HepG2 (cell line): ENCODE measurements at regions of chr4 and their contacts with region 1.

Region 1: GRCh38 chr4:79958466-79959264 is 114.4 kb downstream of the ANTXR2 start:
- DNase-seq: no peak
- ATAC-seq: no peak
- H3K4me3 ChIP-seq: no peak overlapping the region
- H3K27ac ChIP-seq: no peak overlapping the region
- H3K4me1 ChIP-seq: no peaks in the 10 kb centered on the region
- H3K27me3 ChIP-seq: no peaks in the 10 kb centered on the region
- CTCF ChIP-seq: no peak
- EP300 ChIP-seq: no peak
- POLR2A ChIP-seq: no peak
- RAD21 ChIP-seq: no peak

Region 2: DNA sequence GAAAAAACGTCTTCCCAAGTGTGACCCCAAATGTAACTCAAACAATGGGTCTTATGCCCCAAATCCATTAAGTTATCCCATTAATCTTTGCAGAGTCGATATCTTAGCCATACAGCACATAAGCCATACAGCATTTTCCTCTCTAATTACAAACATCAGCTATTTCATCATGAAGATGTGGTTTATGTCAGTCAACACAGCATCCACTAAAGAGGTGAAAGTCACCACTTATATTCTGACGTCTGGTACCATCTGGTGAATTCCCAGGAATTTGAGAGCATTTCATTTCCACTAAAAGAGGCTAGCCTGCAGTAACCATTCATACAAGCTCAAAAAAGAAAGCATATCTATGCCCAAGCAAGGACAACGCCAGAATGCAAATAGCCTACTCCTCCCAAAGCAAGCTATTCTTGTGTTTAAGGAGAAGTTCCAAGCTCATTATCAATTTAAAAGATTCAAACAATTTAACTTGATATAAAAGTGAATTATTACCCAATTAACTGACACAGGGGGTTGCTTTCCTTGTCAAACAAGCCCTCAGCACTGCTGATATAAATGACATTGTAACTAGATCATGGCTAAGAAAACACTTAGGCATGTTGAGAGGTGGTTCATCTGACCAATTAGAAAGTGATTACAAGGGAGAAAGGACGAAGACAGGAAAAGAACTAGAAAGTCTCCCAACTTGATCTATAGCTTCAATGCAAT is 88.9 kb before region 1 on chr4:
- CTCF ChIA-PET with region 1: no interaction called
- POLR2A ChIA-PET with region 1: no interaction called
- in situ Hi-C with region 1: no loop called
- intact Hi-C with region 1: no loop called
- DNase-seq: no peak
- ATAC-seq: no peak
- H3K4me3 ChIP-seq: no peak overlapping the region
- H3K27ac ChIP-seq: no peak overlapping the region
- H3K4me1 ChIP-seq: no peaks in the 10 kb centered on the region
- H3K27me3 ChIP-seq: no peaks in the 10 kb centered on the region
- CTCF ChIP-seq: no peak
- EP300 ChIP-seq: no peak
- POLR2A ChIP-seq: no peak
- RAD21 ChIP-seq: no peak

Region 3: GRCh38 chr4:79996851-79997250 is 38.2 kb after region 1 on chr4:
- CTCF ChIA-PET with region 1: no interaction called
- POLR2A ChIA-PET with region 1: no interaction called
- in situ Hi-C with region 1: no loop called
- intact Hi-C with region 1: loop called (anchors 1 kb)
- DNase-seq: no peak
- ATAC-seq: no peak
- H3K4me3 ChIP-seq: no peak overlapping the region
- H3K27ac ChIP-seq: no peak overlapping the region
- H3K4me1 ChIP-seq: no peaks in the 10 kb centered on the region
- H3K27me3 ChIP-seq: no peaks in the 10 kb centered on the region
- CTCF ChIP-seq: no peak
- EP300 ChIP-seq: no peak
- POLR2A ChIP-seq: no peak
- RAD21 ChIP-seq: no peak